Caco-2 (cell line): ENCODE measurements at regions of chr9 and their contacts with region 1.

Region 1: DNA sequence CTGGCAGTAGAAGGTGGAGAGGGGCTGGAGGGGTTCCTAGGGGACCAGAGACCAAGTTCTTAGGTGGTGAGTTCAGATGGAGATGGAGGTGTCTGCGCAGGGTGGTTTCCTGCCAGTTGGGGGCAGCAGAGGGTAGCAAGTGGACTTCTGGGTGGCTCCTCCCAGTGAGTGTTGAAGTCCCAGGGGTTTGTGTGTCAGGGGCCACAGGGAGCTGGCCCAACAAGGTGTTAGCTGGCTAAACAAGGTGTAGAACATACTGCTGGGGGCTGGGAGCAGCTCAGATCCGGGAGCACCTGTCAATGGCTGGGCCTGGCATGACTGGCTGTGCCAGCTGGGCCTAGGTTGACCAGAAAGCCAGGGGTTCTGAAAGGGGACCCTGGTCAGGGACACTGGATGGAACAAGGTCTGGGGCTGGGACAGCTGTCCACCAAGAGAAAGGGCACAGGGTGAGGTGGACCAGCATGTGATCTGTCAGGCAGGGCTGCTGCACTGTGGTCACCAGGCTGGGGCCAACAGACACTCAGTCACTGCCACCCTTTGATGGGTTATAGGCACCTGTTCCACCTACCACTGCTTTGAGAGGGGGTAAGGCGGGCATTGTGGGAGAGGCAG is 35.6 kb downstream of the DAB2IP start:
- DNase-seq: peak; percentile 80 to 85
- H3K4me3 ChIP-seq: no peak overlapping the region
- H3K4me3 Mint-ChIP-seq: no peak overlapping the region
- H3K27ac Mint-ChIP-seq: peak overlapping the region; percentile 35
- H3K4me1 ChIP-seq: peaks cover 8% of the 10 kb centered on the region
- H3K4me1 Mint-ChIP-seq: peaks cover 18% of the 10 kb centered on the region
- H3K27me3 ChIP-seq: no peaks in the 10 kb centered on the region
- H3K27me3 Mint-ChIP-seq: no peaks in the 10 kb centered on the region
- CTCF ChIP-seq: peak; percentile 90

Region 2: DNA sequence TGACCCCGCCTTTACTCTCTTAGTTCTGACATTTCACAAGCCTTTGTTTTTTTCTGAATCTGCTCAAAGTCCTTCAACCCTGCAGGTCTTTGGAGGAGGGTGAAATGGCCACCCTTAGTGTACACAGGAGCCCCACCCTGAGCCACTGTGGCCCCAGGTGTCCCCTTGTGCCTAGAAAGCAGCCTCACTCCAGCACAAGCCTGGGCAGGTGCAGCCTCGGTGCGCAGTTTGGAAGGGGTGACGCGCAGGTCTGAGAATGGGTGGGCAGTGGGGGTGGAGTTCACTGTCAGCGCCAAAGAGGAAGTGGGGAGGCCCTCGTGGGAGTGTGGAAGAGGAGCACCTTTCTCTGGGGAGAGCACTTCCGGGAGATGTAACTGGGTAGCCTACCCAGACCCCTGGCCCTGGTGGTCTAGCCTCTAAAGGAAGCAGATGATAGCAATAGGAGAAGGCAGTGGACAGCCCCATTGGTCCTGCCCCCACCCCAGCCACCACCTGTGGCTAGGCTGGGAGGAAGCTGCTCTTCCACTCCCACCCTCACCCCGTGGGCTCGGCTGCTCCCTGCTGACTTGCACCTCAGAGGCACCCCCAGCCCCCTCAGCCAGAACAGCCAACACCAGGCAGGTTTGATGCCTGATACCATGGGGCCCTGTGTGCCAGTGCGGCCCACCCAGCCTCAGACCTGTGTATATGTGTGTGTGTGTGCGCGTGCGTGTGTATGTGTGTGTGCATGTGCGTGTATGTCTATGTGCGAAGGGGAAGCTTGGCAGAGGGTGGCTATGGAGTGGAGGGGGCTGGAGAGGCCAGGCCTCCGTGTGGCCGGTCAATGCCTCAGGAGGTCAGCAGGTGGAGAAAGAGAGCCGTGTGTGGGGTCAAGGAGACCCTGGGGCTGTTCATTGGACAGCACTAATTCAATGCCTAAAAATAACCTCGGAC is 52.4 kb before region 1 on chr9:
- CTCF ChIA-PET with region 1: interaction called, 19 read pairs
- POLR2A ChIA-PET with region 1: no interaction called
- intact Hi-C with region 1: loop called (anchors 2 kb)
- DNase-seq: peak; percentile 72 to 74
- H3K4me3 ChIP-seq: no peak overlapping the region
- H3K4me3 Mint-ChIP-seq: no peak overlapping the region
- H3K27ac Mint-ChIP-seq: no peak overlapping the region
- H3K4me1 ChIP-seq: peaks cover 12% of the 10 kb centered on the region
- H3K4me1 Mint-ChIP-seq: peaks cover 5% of the 10 kb centered on the region
- H3K27me3 ChIP-seq: no peaks in the 10 kb centered on the region
- H3K27me3 Mint-ChIP-seq: no peaks in the 10 kb centered on the region
- CTCF ChIP-seq: peak; percentile 79 to 87

Region 3: GRCh38 chr9:121650217-121651007 is 36.6 kb before region 1 on chr9:
- CTCF ChIA-PET with region 1: interaction called, 4 read pairs
- POLR2A ChIA-PET with region 1: no interaction called
- intact Hi-C with region 1: loop called (anchors 5 kb)
- DNase-seq: peak; percentile 94 to 95
- H3K4me3 ChIP-seq: peak overlapping the region; percentile 69
- H3K4me3 Mint-ChIP-seq: peak overlapping the region; percentile 73
- H3K27ac Mint-ChIP-seq: peak overlapping the region; percentile 18
- H3K4me1 ChIP-seq: peaks cover 22% of the 10 kb centered on the region
- H3K4me1 Mint-ChIP-seq: peaks cover 18% of the 10 kb centered on the region
- H3K27me3 ChIP-seq: no peaks in the 10 kb centered on the region
- H3K27me3 Mint-ChIP-seq: no peaks in the 10 kb centered on the region
- CTCF ChIP-seq: no peak

Region 4: GRCh38 chr9:121698627-121699570 is 11.9 kb after region 1 on chr9:
- CTCF ChIA-PET with region 1: interaction called, 13 read pairs
- POLR2A ChIA-PET with region 1: no interaction called
- intact Hi-C with region 1: no loop called
- DNase-seq: peak in 1 of 2 experiments; percentile 42
- H3K4me3 ChIP-seq: peak overlapping the region; percentile 50
- H3K4me3 Mint-ChIP-seq: peak overlapping the region; percentile 65
- H3K27ac Mint-ChIP-seq: no peak overlapping the region
- H3K4me1 ChIP-seq: peaks cover 9% of the 10 kb centered on the region; the same call in 1 of the 2 replicates
- H3K4me1 Mint-ChIP-seq: no peaks in the 10 kb centered on the region
- H3K27me3 ChIP-seq: no peaks in the 10 kb centered on the region
- H3K27me3 Mint-ChIP-seq: no peaks in the 10 kb centered on the region
- CTCF ChIP-seq: no peak

Region 5: GRCh38 chr9:121861501-121862180 is 174.6 kb after region 1 on chr9:
- CTCF ChIA-PET with region 1: interaction called, 12 read pairs
- POLR2A ChIA-PET with region 1: no interaction called
- intact Hi-C with region 1: loop called (anchors 1 kb)
- DNase-seq: peak; percentile 68 to 69
- H3K4me3 ChIP-seq: no peak overlapping the region
- H3K4me3 Mint-ChIP-seq: no peak overlapping the region
- H3K27ac Mint-ChIP-seq: no peak overlapping the region
- H3K4me1 ChIP-seq: no peaks in the 10 kb centered on the region
- H3K4me1 Mint-ChIP-seq: no peaks in the 10 kb centered on the region
- H3K27me3 ChIP-seq: no peaks in the 10 kb centered on the region
- H3K27me3 Mint-ChIP-seq: peaks cover 14% of the 10 kb centered on the region
- CTCF ChIP-seq: peak; percentile 58 to 89

Region 6: DNA sequence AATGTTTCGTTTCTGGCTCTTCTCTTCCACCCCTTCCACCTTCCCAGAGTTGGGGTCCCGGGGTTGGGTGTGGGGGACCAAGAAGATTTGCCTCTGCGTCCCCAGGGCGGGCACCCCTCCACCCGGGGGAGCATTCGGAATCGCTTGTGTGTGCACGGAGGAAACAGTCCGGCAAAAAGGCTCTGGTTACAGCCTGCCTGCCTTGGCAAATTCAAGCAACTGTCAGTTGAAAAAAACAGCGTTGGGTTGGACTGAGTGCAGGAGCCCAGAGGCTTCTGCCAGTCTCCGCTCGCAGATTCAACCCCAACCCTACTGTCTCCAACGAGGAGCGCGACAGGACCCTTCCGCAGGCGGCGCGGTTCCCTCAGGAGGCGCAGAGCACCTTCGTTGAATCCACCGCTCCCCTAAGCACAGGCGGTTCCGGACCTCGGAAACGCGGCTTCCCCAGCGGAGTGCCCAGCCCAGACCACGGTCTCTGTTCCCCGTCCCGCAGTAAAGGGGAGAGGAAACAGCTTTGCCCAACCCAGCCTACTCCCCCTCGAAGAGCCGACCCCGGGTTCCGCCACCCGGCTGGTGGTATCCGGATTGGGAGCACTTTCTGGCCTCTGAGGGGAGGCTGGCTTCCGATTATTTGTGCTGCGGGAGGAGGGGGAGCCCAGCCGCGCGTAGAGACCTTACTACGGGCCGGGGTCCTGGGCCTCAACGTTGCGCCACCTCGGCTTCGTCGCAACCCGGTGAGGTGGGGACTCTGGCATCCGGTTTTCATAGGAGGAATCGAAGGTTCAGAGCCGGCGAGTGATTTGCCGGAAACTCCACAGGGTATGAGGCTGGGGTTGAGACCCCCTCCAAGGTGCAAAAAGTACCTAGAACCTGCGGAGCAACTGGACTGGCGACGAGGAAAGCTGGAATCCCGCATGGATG is 532.2 kb after region 1 on chr9:
- CTCF ChIA-PET with region 1: no interaction called
- POLR2A ChIA-PET with region 1: no interaction called
- intact Hi-C with region 1: no loop called
- DNase-seq: no peak
- H3K4me3 ChIP-seq: no peak overlapping the region
- H3K4me3 Mint-ChIP-seq: no peak overlapping the region
- H3K27ac Mint-ChIP-seq: no peak overlapping the region
- H3K4me1 ChIP-seq: no peaks in the 10 kb centered on the region
- H3K4me1 Mint-ChIP-seq: no peaks in the 10 kb centered on the region
- H3K27me3 ChIP-seq: no peaks in the 10 kb centered on the region
- H3K27me3 Mint-ChIP-seq: peaks cover 3% of the 10 kb centered on the region
- CTCF ChIP-seq: no peak